Colonic mucosa (tissue), 4 donors: ENCODE measurements at regions of chrX and their contacts with region 1.

Region 1: DNA sequence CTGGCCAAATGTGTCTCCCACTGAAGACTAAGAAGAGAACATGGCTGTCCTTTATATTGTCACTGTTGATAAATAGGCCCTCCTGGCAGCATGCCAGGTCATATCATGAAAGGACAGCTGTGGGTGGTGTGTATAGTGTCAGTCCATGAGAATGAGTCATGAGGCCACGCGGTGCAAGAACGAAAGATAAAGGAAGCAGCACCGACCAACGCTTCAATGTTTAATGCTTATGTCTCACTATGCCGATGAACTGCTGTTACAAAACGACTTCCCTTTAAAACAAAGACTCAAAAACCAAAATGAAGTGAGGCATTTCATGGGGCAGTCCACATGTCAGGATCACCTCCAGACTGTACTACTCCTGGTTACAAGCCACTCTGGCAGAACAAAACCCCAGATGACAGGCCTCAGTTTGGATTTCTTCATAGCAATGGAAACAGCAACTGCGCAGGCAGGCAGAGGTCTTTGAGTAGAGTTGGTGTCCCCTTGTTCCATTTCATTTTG is 5.2 kb upstream of the TCEANC start:
- DNase-seq: peak; percentile 63
- H3K4me3 ChIP-seq: no peak overlapping the region
- H3K27ac ChIP-seq: no peak overlapping the region
- H3K4me1 ChIP-seq: peaks cover 5% of the 10 kb centered on the region
- H3K27me3 ChIP-seq: no peaks in the 10 kb centered on the region
- CTCF ChIP-seq: no peak

Region 2: GRCh38 chrX:13212191-13212651 is 435.5 kb before region 1 on chrX:
- intact Hi-C with region 1: no loop called
- DNase-seq: no peak
- H3K4me3 ChIP-seq: no peak overlapping the region
- H3K27ac ChIP-seq: no peak overlapping the region
- H3K4me1 ChIP-seq: no peaks in the 10 kb centered on the region
- H3K27me3 ChIP-seq: no peaks in the 10 kb centered on the region
- CTCF ChIP-seq: no peak

Region 3: GRCh38 chrX:13506574-13506973 is 141.2 kb before region 1 on chrX:
- intact Hi-C with region 1: loop called (anchors 2 kb)
- DNase-seq: peak; percentile 39
- H3K4me3 ChIP-seq: no peak overlapping the region
- H3K27ac ChIP-seq: no peak overlapping the region
- H3K4me1 ChIP-seq: no peaks in the 10 kb centered on the region
- H3K27me3 ChIP-seq: peaks cover 6% of the 10 kb centered on the region
- CTCF ChIP-seq: peak; percentile 80

Region 4: DNA sequence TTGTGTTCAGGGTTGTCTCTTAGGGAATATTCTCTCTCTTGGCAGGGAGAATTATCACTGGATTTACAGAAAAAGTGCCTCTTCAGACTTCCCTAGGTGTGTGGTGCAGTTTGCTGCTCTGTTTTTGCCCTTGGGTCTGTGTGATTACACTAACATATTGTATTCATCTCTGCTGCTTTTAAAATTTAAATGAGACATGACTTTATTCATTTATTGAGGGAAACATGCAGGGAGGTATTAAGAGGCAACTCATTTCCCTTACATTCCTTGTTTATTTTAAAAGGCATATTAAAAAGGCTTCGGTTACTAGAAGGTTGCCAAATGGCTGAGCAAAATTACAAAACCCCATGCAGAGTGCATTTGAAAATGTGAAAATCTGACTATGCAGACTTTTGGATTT is 517.1 kb after region 1 on chrX:
- intact Hi-C with region 1: no loop called
- DNase-seq: no peak
- H3K4me3 ChIP-seq: no peak overlapping the region
- H3K27ac ChIP-seq: no peak overlapping the region
- H3K4me1 ChIP-seq: no peaks in the 10 kb centered on the region
- H3K27me3 ChIP-seq: no peaks in the 10 kb centered on the region
- CTCF ChIP-seq: no peak